Mucosa of descending colon (tissue), 3 donors: ENCODE measurements at regions of chr11 and their contacts with region 1.

Region 1: GRCh38 chr11:122781378-122782195 is 56.7 kb upstream of the CRTAM start:
- DNase-seq: peak; percentile 72 to 91 (median 84)
- ATAC-seq: peak; percentile 93
- H3K4me3 ChIP-seq: no peak overlapping the region
- H3K4me1 ChIP-seq: no peaks in the 10 kb centered on the region
- CTCF ChIP-seq: peak; percentile 88

Region 2: DNA sequence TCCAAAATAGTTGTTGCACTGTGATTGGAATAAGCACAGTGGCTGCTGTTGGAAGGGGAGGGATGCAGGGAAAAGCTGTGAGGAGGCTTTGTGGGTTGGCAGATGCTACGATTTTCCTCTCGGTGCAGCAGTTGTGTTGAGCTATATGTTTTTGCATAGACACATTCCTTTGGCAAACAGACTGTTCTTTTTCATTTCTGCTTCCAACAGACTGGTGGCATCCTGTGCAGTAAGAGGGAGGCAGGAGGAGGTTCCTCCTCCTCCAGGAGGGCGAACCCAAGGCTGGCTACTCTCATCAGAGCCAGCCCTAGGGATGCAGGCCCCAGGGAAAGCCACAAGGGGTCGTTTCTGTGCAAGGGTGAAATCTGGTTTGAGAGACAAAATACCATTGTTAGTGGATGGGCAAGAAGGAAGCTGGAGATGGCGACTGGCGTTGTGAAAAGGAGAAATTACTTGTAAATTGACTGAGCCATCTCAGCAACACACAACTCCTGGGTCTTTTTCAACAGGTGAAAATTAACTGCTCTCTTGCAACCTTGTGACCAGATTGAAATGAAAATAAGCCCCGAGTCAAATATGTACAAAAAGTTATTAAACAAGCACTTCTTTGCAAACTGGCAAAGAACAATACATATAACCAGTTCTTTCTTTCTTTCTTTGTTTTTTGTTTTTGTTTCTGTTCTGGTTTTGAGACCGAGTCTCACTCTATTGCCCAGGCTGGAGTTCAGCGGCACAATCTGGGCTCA is 152.6 kb before region 1 on chr11:
- intact Hi-C with region 1: loop called (anchors 2 to 5 kb)
- DNase-seq: peak in 2 of 3 donors; percentile 73 to 74
- ATAC-seq: peak; percentile 75
- H3K4me3 ChIP-seq: no peak overlapping the region
- H3K4me1 ChIP-seq: no peaks in the 10 kb centered on the region
- CTCF ChIP-seq: peak; percentile 71